Activated CD4-positive, alpha-beta memory T cell treated with anti-CD3 and anti-CD28 coated beads for 36 hours (primary cell): ENCODE measurements at regions of chr10 and their contacts with region 1.

Region 1: DNA sequence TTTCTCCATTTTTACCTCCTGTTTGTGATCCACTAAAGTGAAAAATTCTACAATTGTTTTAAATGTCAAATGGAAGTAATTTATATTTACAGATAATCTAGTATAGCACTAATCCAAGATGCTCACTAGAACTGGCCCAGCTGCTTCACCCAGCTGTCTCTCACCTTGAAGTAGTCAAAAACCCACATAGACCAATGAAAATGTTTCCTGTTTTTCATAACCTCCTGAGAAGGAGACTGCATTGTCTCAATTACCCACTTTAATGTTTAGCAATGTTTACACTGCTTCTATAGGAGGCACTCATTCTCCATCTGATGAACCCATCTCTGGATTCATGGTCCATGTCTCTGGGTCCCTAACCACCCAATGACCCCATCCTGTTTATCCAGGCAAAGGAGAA is 56.1 kb upstream of the ADO start:
- DNase-seq: no peak
- H3K4me3 Mint-ChIP-seq: peak overlapping the region; percentile 12
- H3K27ac Mint-ChIP-seq: peak overlapping the region; percentile 59
- H3K4me1 Mint-ChIP-seq: peaks cover 25% of the 10 kb centered on the region
- H3K27me3 Mint-ChIP-seq: no peaks in the 10 kb centered on the region

Region 2: GRCh38 chr10:62545160-62546066 is 203.0 kb before region 1 on chr10:
- CTCF ChIA-PET with region 1: no interaction called
- POLR2A ChIA-PET with region 1: no interaction called
- intact Hi-C with region 1: no loop called
- DNase-seq: no peak
- H3K4me3 Mint-ChIP-seq: no peak overlapping the region
- H3K27ac Mint-ChIP-seq: no peak overlapping the region
- H3K4me1 Mint-ChIP-seq: no peaks in the 10 kb centered on the region
- H3K27me3 Mint-ChIP-seq: no peaks in the 10 kb centered on the region

Region 3: DNA sequence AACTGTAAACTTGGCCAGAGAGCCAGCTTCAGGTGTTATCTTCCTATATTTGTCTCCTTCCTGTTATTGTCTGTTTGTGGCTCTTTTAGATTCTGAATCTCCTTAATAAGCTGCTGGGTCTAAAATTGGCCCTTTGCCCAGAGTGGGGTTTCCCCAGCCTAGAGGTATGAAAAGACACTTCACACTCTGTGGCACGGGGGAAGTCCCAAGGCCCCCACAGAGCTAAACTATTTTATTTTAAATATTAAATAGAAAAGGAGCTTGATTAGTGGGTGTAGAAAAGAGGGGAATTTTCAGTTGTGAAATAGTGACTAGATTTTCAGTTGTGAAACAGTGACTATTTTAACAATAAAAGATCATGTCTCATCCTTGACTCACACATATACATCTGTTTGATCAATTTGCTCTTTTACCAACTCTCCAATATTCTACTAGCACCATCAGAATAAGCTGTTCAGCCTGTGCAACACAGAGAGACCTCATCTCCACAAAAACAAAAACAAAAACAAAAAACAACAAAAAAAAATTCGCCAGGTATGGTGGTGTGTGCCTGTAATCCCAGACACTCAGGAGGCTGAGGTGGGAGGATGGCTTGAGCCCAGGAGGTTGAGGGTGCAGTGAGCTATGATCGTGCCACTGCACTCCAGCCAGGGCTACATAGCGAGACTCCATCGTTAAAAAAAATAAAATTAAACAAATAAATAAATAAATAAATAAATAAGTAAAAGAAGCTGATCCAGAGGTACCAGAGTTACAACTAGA is 31.3 kb after region 1 on chr10:
- CTCF ChIA-PET with region 1: interaction called, 13 read pairs
- POLR2A ChIA-PET with region 1: interaction called, 5 read pairs
- intact Hi-C with region 1: loop called (anchors 1 kb)
- DNase-seq: peak; percentile 89
- H3K4me3 Mint-ChIP-seq: no peak overlapping the region
- H3K27ac Mint-ChIP-seq: no peak overlapping the region
- H3K4me1 Mint-ChIP-seq: peaks cover 22% of the 10 kb centered on the region
- H3K27me3 Mint-ChIP-seq: peaks cover 1% of the 10 kb centered on the region